ENCODE measurements at regions of chr6 and their contacts with region 1.

Region 1: DNA sequence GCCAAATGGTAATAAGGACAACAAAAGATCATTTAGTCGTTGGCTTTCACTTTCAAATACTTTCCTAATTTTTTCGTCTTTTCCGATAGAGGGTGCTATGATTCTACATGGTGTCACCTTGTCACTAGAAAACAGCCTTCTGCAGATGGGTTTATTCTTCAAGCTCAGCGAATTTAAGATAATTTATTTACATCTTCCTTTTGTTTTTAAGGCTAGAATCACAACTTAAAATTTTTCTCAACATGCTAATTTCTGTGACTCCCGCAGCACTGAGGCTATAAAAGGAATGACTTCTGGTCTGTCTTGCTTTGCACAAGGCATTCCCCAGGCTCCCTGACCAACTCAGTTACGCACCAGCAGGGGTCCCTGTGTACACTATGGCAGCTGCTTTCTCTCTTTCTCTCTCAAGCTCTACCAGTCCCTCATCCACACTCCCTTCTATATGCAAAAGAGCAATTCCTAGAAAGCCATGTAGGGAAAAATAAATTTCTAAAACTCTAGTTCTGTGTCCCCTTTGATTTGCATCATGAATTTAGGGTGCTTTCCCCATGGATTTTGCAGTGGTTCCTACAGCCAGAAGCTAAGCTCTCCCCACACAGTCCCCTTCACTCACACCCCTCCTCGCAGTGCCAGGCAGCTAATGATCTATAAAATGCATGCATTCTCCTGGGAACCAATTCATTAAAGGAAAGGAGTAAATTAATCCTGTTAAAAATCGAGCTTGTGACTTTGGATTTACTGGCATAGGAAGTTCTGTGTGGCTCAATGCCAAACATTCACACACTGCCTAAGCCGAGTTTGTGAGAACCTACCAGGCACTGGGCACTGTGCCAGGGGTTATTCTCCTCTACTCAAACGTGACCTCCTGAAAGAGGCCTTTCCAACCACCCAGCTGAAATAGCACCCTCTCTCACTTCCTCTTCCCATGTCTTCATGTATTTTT is 74.5 kb downstream of the DCDC2 start:
- DNase-seq: peak; percentile 38
- ATAC-seq: peak; percentile 28
- H3K4me3 ChIP-seq: no peak overlapping the region
- H3K4me3 Mint-ChIP-seq: peak overlapping the region; percentile 4
- H3K27ac ChIP-seq: no peak overlapping the region
- H3K27ac Mint-ChIP-seq: no peak overlapping the region
- H3K4me1 ChIP-seq: peaks cover 10 to 13% of the 10 kb centered on the region in 2 donors
- H3K4me1 Mint-ChIP-seq: no peaks in the 10 kb centered on the region
- H3K27me3 ChIP-seq: peaks cover 0 to 12% (median 1%) of the 10 kb centered on the region in 4 experiments
- H3K27me3 Mint-ChIP-seq: peaks cover 11% of the 10 kb centered on the region
- CTCF ChIP-seq: peak; percentile 66

Region 2: DNA sequence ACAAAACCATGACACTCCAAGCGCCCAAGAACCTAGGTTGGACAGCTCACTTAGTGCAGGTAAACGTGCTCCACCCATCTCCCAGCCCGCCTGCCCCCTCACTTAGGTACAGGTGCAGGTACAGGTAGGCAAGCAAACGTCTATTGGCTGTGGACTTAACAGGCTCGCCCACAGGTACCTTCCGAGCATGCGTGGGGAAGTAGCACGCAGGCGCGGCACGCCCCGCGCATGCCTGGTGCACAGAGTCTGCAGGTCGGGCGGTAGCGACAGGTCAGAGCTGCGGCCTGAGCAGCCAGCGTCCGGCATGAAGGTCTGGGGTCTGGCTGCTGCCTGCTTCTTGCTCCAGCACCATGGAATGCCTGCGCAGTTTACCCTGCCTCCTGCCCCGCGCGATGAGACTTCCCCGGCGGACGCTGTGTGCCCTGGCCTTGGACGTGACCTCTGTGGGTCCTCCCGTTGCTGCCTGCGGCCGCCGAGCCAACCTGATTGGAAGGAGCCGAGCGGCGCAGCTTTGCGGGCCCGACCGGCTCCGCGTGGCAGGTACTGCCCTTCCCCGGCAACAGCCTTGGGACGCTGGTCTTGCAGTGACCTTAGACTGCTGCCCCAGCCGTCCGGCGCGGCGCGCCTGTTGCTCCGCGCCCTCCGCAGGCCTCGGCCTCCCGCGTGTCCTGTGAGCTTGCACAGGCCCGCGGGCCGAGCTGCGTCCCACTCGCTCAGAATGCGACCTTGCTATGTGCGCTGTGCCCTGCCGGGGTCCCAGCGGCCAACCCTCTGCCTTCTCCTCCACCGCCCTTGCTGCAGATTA is 119.6 kb after region 1 on chr6 and contains the start of gene MRS2:
- CTCF ChIA-PET with region 1: no interaction called
- POLR2A ChIA-PET with region 1: no interaction called
- intact Hi-C with region 1: loop called (anchors 10 kb)
- DNase-seq: peak; percentile 86
- ATAC-seq: peak; percentile 96
- H3K4me3 ChIP-seq: peak within 1 kb of the TSS; percentile 56 to 87 (median 78)
- H3K4me3 Mint-ChIP-seq: peak within 1 kb of the TSS; percentile 96
- H3K27ac ChIP-seq: peak within 1 kb of the TSS; percentile 2 to 15
- H3K27ac Mint-ChIP-seq: peak within 1 kb of the TSS; percentile 83
- H3K4me1 ChIP-seq: peaks cover 11 to 15% of the 10 kb centered on the region in 2 donors
- H3K4me1 Mint-ChIP-seq: peaks cover 38% of the 10 kb centered on the region
- H3K27me3 ChIP-seq: peaks cover 0 to 12% (median 3%) of the 10 kb centered on the region in 4 experiments
- H3K27me3 Mint-ChIP-seq: peaks cover 10% of the 10 kb centered on the region
- CTCF ChIP-seq: no peak
- total RNA-seq, gene MRS2: 25.5 and 26.7 TPM in 2 replicates

Measured in B cell (primary cell).